ENCODE measurements at regions of chr1 and their contacts with region 1.

Region 1: GRCh38 chr1:75771978-75772377 is 14.1 kb upstream of the RABGGTB start:
- DNase-seq: no peak
- ATAC-seq: no peak

Region 2: DNA sequence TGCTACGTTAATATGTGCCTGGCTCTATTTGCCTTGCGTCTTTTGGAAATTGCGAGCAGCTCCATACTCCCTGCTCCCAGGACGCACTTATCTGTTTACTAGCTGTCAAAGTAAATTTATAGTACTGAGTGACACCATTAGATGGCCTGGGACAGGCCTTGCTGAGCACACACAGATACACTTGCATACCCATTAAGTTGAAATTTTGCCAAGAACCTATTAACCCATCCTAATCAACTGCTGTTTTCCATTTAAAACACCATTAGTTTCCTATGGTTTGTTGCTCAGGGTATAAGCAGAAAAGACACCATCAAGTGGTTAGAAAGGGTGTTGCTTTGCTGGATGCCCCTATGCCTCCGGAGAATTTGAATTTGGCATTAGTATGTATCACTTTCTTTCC is 348.4 kb before region 1 on chr1:
- intact Hi-C with region 1: no loop called
- DNase-seq: no peak
- ATAC-seq: peak; percentile 15

Region 3: GRCh38 chr1:75582725-75583261 is 189.2 kb before region 1 on chr1:
- intact Hi-C with region 1: no loop called
- DNase-seq: no peak
- ATAC-seq: no peak

Region 4: GRCh38 chr1:75845576-75845975 is 73.6 kb after region 1 on chr1:
- intact Hi-C with region 1: loop called (anchors 2 kb)
- DNase-seq: no peak
- ATAC-seq: no peak